H1 (cell line): ENCODE measurements at regions of chr3 and their contacts with region 1.

Region 1: DNA sequence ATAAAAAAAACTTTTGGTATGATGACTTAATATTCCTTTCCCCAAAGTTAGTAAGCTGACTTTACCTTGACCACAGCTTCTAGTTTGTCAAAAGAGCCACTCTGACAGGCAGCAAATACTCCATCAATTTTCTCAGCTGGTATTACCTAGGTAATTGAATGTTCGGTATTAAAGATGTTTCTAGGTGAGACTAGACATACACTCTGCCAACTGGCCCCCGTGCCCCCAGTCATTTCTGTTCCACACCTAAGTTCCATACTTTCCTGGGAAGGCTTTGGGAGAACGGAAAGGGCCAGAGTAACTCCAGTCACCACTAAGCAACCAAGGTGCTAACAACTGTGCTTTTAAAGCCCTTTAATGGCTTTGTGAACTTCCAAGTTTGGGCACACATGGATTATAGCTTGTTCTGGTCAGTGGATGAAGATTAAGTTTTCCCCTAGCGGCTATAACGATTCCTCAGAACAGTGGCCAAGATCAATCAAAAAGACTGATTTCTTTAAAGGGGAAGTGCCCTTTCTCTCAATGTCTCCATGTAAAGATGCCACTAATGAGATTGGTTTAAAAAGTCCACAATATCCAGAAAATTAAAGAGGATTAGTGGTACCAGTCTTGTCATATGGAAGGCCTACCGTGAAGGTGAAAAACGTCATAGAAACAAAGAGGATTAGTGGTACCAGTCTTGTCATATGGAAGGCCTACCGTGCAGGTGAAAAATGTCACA is 7.0 kb downstream of the EIF4A2 start:
- DNase-seq: no peak
- H3K4me3 ChIP-seq: no peak overlapping the region
- H3K27ac ChIP-seq: no peak overlapping the region
- H3K4me1 ChIP-seq: peaks cover 0 to 2% (median 0%) of the 10 kb centered on the region in 4 experiments; a peak in 2 of 7 replicates
- H3K27me3 ChIP-seq: no peaks in the 10 kb centered on the region
- CTCF ChIP-seq: no peak
- EP300 ChIP-seq: no peak
- POLR2A ChIP-seq: peak; percentile 85 to 99
- RAD21 ChIP-seq: no peak

Region 2: DNA sequence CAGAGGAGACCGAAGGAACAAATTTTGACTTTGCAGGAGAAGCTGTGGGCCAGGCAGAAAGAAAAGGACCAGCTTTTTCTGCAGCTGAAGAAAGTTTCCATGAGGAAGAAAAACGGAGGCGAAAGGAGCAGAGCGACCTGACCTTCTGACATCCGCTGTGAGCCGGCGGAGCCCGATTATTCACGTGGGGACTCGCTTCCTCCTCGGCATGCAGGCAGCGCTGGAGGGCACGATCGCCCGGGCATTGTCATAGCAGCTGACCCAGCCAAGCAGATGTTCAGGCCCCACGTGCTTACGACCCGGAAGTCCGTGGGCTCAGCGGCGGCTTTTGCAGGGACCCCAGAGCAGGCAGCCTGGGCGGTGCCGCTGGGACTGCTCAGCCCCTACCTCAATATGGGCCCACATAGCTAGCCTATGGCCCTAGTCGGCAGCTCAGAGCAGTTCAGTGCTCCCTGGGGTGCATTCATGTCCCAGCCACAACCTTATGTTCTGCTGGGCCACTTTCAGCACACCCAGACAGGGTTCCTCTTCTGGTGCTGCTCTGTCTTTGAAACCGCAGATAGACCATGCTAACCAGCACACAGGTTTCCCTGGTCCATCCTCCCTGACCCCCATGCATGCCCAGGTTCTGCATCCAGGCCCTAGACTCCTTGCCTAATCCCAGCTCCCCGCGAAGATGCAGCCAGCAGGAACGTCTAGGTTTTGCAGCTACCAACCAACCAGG is 17.6 kb before region 1 on chr3:
- CTCF ChIA-PET with region 1: no interaction called
- POLR2A ChIA-PET with region 1: interaction called, 170 read pairs
- DNase-seq: no peak
- H3K4me3 ChIP-seq: no peak overlapping the region; a peak in 1 of 8 replicates
- H3K27ac ChIP-seq: no peak overlapping the region
- H3K4me1 ChIP-seq: peaks cover 0 to 19% (median 5%) of the 10 kb centered on the region in 4 experiments; a peak in 6 of 7 replicates
- H3K27me3 ChIP-seq: peaks cover 0 to 3% (median 0%) of the 10 kb centered on the region in 4 experiments; a peak in 2 of 7 replicates
- CTCF ChIP-seq: no peak
- EP300 ChIP-seq: no peak
- POLR2A ChIP-seq: no peak
- RAD21 ChIP-seq: no peak

Region 3: DNA sequence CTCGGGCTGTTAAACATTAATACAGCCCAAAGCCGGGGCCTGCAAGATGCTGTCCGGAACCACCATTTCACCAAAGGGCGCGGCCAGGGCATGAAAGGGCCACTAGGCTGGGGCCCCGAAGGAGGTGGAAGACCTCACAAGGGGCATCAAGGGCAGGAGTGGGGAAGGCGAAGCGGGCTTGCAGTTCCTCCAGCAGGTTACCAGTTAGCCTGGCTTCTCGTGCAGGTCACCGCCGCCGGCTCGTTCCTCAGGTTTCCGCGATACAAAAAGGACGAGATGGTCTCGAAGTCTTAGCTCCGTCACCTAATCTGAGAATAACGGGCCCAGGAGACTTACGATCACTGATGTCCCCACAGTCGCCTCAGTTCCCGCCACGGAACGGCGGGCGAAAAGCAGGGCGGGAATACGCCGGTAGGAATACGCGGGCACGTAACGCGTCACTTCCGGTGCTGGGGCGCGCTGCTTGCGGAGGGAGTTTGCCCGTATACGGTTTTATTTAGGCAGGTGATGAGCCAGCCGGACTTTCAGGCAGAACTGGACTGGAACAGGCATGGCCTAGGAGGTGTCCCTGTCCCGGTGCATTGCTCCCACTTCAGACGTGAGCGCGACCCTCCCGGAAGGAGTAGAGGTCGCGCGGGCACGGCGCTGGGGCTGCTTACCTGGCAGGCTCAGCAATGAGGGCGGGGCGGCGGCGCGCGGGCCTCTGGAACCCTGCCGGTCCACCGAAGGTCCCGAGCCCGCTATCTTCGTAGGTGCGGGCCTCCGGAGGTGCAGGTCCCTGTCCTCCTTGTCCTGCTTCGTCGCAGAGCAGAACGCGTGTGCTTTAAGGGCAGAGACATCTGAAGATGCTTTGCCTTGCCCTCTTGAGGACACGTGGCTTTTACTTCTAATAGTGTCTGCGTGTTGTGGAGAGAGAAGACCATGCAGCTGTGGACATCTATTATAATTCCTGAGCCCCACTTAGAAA is 16.0 kb after region 1 on chr3 and contains the start of gene RFC4:
- CTCF ChIA-PET with region 1: interaction called, 3 read pairs
- POLR2A ChIA-PET with region 1: interaction called, 166 read pairs
- DNase-seq: peak in 1 of 2 experiments; percentile 89
- H3K4me3 ChIP-seq: peak within 1 kb of the TSS; percentile 72 to 97 (median 82)
- H3K27ac ChIP-seq: peak within 1 kb of the TSS; percentile 97
- H3K4me1 ChIP-seq: peaks cover 0 to 9% (median 3%) of the 10 kb centered on the region in 4 experiments; a peak in 3 of 7 replicates
- H3K27me3 ChIP-seq: no peaks in the 10 kb centered on the region
- CTCF ChIP-seq: no peak
- EP300 ChIP-seq: no peak; a peak in 1 of 3 replicates
- POLR2A ChIP-seq: peak; percentile 67 to 96
- RAD21 ChIP-seq: peak; percentile 0 to 1; a peak in 1 of 4 replicates
- total RNA-seq, gene RFC4: 86.9 and 100 TPM in 2 replicates

Region 4: GRCh38 chr3:186815435-186815834 is 25.0 kb after region 1 on chr3:
- CTCF ChIA-PET with region 1: interaction called, 5 read pairs
- POLR2A ChIA-PET with region 1: interaction called, 77 read pairs
- DNase-seq: peak in 1 of 2 experiments; percentile 10
- H3K4me3 ChIP-seq: no peak overlapping the region
- H3K27ac ChIP-seq: no peak overlapping the region
- H3K4me1 ChIP-seq: peaks cover 0 to 4% (median 3%) of the 10 kb centered on the region in 4 experiments; a peak in 3 of 7 replicates
- H3K27me3 ChIP-seq: no peaks in the 10 kb centered on the region
- CTCF ChIP-seq: no peak
- EP300 ChIP-seq: no peak
- POLR2A ChIP-seq: no peak
- RAD21 ChIP-seq: no peak

Region 5: DNA sequence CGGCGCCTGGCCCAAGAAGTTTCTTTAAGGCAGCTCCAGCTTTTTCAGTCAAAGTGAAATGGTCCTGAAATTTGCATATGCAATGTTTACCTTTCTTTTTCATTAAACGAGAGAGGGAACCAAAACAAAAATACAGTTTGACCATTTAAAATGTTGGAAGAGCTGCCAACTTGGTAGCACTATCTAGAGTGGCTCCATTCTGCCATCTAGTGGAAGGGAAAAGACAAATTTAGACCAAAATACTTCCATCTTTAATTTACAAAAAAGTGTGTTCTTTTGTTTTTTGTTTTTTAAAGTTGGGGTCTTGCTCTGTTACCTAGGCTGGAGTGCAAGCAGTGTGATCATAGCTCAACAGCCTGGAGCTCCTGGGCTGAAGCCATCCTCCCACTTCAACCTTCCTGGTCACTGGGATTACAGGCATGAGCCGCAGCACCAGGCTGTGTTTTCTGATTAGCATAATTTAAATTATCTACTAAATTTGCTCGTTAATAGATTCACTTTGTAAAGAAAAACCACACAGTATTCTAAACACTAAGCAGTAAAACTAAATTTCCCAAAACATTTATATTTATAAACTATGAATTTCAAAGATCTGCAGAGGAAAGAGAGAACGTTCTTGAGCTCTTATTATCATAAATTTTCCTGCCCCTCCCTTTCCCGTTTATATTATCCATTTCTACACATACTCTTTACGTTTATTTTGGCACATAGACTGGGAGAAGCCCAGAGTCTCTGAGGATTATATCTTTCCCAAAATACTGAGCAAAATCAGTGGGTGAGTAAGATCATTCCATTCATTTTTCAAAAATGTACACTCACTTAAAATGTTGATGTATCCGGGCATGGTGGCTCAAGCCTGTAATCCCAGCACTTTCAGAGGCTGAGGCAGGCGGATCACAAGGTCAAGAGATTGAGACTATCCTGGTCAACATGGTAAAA is 31.3 kb after region 1 on chr3:
- CTCF ChIA-PET with region 1: interaction called, 5 read pairs
- POLR2A ChIA-PET with region 1: interaction called, 77 read pairs
- DNase-seq: no peak
- H3K4me3 ChIP-seq: no peak overlapping the region
- H3K27ac ChIP-seq: no peak overlapping the region
- H3K4me1 ChIP-seq: peaks cover 7 to 23% (median 19%) of the 10 kb centered on the region in 4 experiments
- H3K27me3 ChIP-seq: peaks cover 0 to 23% (median 14%) of the 10 kb centered on the region in 4 experiments; a peak in 5 of 7 replicates
- CTCF ChIP-seq: peak in 2 of 3 experiments; percentile 41 to 57; a peak in 2 of 4 replicates
- EP300 ChIP-seq: no peak
- POLR2A ChIP-seq: no peak
- RAD21 ChIP-seq: peak; percentile 73 to 78

Region 6: GRCh38 chr3:186826976-186827731 is 36.7 kb after region 1 on chr3:
- CTCF ChIA-PET with region 1: interaction called, 3 read pairs
- POLR2A ChIA-PET with region 1: interaction called, 73 read pairs
- DNase-seq: peak in 1 of 2 experiments; percentile 88
- H3K4me3 ChIP-seq: peak overlapping the region; percentile 43 to 69 (median 46)
- H3K27ac ChIP-seq: no peak overlapping the region
- H3K4me1 ChIP-seq: peaks cover 7 to 23% (median 18%) of the 10 kb centered on the region in 4 experiments
- H3K27me3 ChIP-seq: peaks cover 0 to 38% (median 29%) of the 10 kb centered on the region in 4 experiments; a peak in 6 of 7 replicates
- CTCF ChIP-seq: no peak
- EP300 ChIP-seq: no peak
- POLR2A ChIP-seq: peak in 1 of 2 experiments; percentile 27; a peak in 1 of 3 replicates
- RAD21 ChIP-seq: no peak

Region 7: DNA sequence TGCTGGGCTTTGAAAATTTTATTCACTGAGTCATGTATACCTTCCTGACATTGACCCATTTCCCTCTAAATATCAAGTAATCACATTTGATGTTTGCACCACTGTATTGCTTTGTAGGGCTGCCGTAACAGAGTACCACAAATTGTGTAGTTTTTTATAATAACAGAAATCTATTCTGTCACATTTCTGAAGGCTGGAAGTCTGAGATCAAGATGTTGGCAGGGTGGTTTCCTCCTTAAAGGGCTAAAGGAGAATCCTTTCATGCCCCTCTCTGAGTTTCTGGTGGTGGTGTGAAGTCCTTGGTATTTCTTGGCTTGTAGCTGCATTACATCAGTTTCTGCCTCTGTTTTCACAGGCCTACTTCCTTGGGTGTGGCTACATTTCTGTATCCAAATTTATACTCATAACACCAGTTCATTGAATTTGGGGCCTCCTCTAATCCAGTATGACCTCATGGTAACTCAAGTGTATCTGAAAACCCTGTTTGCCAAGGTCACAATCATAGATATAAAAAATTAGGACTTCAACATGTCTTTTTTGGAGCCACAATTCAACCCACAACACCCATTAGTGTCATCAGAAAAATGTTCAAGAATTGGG is 110.8 kb after region 1 on chr3:
- CTCF ChIA-PET with region 1: no interaction called
- POLR2A ChIA-PET with region 1: no interaction called
- DNase-seq: no peak
- H3K4me3 ChIP-seq: no peak overlapping the region
- H3K27ac ChIP-seq: no peak overlapping the region
- H3K4me1 ChIP-seq: peaks cover 2 to 8% (median 4%) of the 10 kb centered on the region in 4 experiments; a peak in 6 of 7 replicates
- H3K27me3 ChIP-seq: no peaks in the 10 kb centered on the region
- CTCF ChIP-seq: no peak
- EP300 ChIP-seq: no peak
- POLR2A ChIP-seq: no peak
- RAD21 ChIP-seq: no peak

Region 8: GRCh38 chr3:187445356-187445755 is 654.9 kb after region 1 on chr3:
- CTCF ChIA-PET with region 1: no interaction called
- POLR2A ChIA-PET with region 1: no interaction called
- DNase-seq: no peak
- H3K4me3 ChIP-seq: no peak overlapping the region
- H3K27ac ChIP-seq: no peak overlapping the region
- H3K4me1 ChIP-seq: peaks cover 0 to 9% (median 3%) of the 10 kb centered on the region in 4 experiments; a peak in 2 of 7 replicates
- H3K27me3 ChIP-seq: no peaks in the 10 kb centered on the region
- CTCF ChIP-seq: no peak
- EP300 ChIP-seq: no peak
- POLR2A ChIP-seq: no peak
- RAD21 ChIP-seq: no peak